Activated CD4-positive, alpha-beta T cell treated with anti-CD3 and anti-CD28 coated beads, Interleukin-2, amount 10 ng/mL, durations not matched to agents 24 days and 14 days (primary cell): ENCODE measurements at regions of chr9 and their contacts with region 1.

Region 1: GRCh38 chr9:22147813-22148524 is 138.9 kb upstream of the CDKN2B start:
- DNase-seq: peak; percentile 75
- H3K4me3 Mint-ChIP-seq: no peak overlapping the region
- H3K27ac Mint-ChIP-seq: no peak overlapping the region
- H3K4me1 Mint-ChIP-seq: peaks cover 22% of the 10 kb centered on the region
- H3K27me3 Mint-ChIP-seq: peaks cover 37% of the 10 kb centered on the region

Region 2: GRCh38 chr9:22088718-22089064 is 59.3 kb before region 1 on chr9:
- intact Hi-C with region 1: no loop called
- DNase-seq: no peak
- H3K4me3 Mint-ChIP-seq: no peak overlapping the region
- H3K27ac Mint-ChIP-seq: no peak overlapping the region
- H3K4me1 Mint-ChIP-seq: peaks cover 6% of the 10 kb centered on the region
- H3K27me3 Mint-ChIP-seq: peaks cover 59% of the 10 kb centered on the region

Region 3: DNA sequence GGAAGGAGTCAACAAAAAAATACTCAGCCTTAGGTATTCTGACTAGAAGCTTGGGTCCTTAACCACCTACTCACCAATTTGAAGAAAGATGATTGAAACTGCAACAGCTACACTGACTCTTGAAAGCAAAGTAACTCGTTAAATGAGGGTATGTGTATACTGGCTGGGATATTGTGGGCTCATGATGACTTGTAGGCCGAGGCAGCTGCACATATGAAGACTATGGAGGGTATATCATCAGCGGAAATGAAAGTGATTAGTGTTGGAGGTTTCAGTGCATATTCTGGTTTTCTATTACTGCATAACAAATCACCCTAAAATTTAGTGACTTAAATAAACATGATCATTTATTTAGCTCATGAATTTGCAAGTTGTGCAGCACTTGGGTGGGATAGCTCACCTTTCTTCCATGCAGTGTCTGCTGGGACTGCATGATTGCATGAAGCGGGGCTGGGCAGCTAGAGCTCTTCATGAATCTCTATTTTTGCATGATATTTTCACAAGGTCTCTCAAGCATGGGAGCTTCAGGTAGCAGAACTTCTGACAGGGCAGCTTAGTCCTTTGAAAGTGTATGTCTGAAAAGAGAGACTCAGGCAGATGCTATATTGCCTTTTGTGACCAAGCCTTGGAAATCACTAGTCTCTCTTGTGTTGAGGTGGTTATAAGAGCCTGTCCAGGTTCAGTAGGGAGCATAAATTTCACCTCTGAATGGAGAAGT is 42.8 kb before region 1 on chr9:
- intact Hi-C with region 1: loop called (anchors 2 kb)
- DNase-seq: no peak
- H3K4me3 Mint-ChIP-seq: no peak overlapping the region
- H3K27ac Mint-ChIP-seq: no peak overlapping the region
- H3K4me1 Mint-ChIP-seq: peaks cover 33% of the 10 kb centered on the region
- H3K27me3 Mint-ChIP-seq: peaks cover 44% of the 10 kb centered on the region

Region 4: DNA sequence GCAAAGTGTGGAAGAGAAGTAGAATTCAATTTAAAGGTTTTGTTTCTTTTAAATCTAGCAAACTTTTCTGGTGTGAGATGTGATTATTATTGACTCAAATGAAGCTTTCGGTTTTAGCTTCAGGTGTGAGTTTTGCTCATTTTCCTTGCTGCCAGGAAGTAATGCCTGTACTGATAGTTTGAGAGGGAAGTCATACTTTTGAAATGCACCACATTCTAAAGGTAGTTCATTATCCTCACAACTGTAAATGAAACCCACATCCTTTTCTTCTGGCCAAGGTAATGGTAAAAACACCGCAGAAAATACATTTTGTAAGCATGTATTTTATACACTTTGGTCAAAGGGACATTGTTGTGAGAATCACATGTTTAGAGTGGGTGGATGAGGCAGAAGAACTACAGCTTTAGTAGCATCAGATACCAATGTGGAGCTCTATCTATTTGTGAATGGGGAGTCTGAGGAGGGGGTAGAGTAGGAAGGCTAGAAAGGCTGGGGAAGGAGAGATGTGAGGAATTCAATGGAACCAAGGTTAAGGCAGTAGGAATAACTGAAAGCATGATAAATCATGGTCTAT is 28.1 kb after region 1 on chr9:
- intact Hi-C with region 1: loop called (anchors 2 kb)
- DNase-seq: peak; percentile 61
- H3K4me3 Mint-ChIP-seq: peak overlapping the region; percentile 4
- H3K27ac Mint-ChIP-seq: peak overlapping the region; percentile 6
- H3K4me1 Mint-ChIP-seq: peaks cover 13% of the 10 kb centered on the region
- H3K27me3 Mint-ChIP-seq: peaks cover 23% of the 10 kb centered on the region

Region 5: DNA sequence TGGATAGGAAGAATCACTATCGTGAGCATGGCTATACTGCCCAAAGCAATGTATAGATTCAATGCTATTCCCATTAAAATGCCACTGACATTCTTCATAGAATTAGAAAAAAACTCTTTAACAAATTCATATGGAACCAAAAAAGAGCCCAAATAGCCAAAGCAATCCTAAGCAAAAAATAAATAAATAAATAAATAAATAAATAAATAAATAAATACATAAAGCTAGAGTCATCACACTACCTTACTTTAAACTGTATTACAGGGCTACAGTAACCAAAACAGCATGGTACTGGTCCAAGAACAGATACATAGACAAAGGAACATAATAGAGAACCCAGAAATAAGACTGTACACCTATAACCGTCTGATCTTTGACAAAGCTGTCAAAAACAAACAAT is 41.5 kb after region 1 on chr9:
- intact Hi-C with region 1: loop called (anchors 5 kb)
- DNase-seq: no peak
- H3K4me3 Mint-ChIP-seq: no peak overlapping the region
- H3K27ac Mint-ChIP-seq: no peak overlapping the region
- H3K4me1 Mint-ChIP-seq: no peaks in the 10 kb centered on the region
- H3K27me3 Mint-ChIP-seq: peaks cover 50% of the 10 kb centered on the region

Region 6: GRCh38 chr9:22208846-22209585 is 61.0 kb after region 1 on chr9:
- intact Hi-C with region 1: loop called (anchors 2 kb)
- DNase-seq: no peak
- H3K4me3 Mint-ChIP-seq: peak overlapping the region; percentile 40
- H3K27ac Mint-ChIP-seq: no peak overlapping the region
- H3K4me1 Mint-ChIP-seq: peaks cover 19% of the 10 kb centered on the region
- H3K27me3 Mint-ChIP-seq: peaks cover 21% of the 10 kb centered on the region

Region 7: GRCh38 chr9:22238809-22239684 is 91.1 kb after region 1 on chr9:
- intact Hi-C with region 1: loop called (anchors 1 kb)
- DNase-seq: no peak
- H3K4me3 Mint-ChIP-seq: no peak overlapping the region
- H3K27ac Mint-ChIP-seq: no peak overlapping the region
- H3K4me1 Mint-ChIP-seq: peaks cover 36% of the 10 kb centered on the region
- H3K27me3 Mint-ChIP-seq: peaks cover 57% of the 10 kb centered on the region

Region 8: DNA sequence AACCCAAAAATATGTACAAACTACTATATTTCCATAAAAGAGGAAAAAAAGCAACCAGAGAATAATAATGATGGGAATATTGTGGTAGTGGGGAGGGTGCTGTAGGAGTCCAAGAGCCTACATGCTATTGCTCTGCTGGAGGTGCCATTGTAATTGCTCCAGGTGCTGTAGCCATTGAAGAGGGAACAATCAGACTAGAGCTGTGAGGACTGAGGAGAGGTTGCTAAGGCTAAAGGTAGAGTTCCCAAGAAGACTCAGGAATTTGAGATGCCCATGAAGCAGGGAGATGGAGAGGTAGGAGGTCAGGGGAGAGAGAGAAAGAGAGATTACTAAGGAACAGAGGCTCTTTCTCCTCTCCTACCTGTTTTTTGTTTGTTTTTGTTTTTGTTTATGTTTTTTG is 692.7 kb after region 1 on chr9:
- intact Hi-C with region 1: no loop called
- DNase-seq: no peak
- H3K4me3 Mint-ChIP-seq: no peak overlapping the region
- H3K27ac Mint-ChIP-seq: no peak overlapping the region
- H3K4me1 Mint-ChIP-seq: no peaks in the 10 kb centered on the region
- H3K27me3 Mint-ChIP-seq: no peaks in the 10 kb centered on the region